AG04449 (cell line): ENCODE measurements at regions of chr10 and their contacts with region 1.

Region 1: DNA sequence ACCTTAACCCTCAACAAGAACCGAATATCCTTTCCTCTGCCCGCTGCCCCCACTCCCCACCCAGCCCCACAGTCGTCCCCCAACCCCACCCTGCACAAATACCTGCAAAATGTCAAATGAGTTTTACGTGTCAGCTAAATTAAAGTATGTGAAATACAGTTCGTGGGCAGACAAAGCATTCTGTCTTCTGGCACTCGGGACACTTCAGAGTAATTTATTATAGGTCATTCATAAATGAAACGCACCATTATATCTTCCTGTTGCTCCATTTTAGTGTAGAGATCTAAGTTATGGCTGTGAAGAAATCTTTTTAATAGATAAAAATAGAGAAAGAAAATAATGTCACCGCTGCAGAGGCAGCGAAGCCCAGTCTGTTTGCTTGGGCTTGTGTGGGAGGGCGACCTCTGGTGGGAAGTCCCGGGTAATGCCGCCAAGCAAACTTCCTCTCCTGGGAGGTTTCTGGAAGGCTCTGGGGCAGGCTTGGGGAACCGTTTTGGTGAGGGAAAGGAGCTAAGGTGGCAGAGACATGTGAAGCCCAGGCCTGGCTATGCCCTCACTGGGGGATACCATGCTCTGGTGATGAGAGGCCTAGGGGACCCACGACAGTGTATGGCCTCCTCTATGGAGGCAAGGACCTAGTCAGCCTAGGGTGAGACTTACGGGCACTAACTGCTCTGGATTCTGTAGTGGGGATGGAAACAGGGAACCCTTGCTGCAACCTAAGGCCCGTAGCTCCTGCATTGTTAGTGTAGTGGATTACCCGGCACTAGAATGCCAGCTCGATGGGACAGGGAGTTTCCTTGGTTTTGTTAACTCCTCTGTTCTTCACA is 604.9 kb downstream of the LRMDA start:
- DNase-seq: no peak
- H3K4me3 ChIP-seq: no peak overlapping the region
- CTCF ChIP-seq: peak; percentile 93

Region 2: DNA sequence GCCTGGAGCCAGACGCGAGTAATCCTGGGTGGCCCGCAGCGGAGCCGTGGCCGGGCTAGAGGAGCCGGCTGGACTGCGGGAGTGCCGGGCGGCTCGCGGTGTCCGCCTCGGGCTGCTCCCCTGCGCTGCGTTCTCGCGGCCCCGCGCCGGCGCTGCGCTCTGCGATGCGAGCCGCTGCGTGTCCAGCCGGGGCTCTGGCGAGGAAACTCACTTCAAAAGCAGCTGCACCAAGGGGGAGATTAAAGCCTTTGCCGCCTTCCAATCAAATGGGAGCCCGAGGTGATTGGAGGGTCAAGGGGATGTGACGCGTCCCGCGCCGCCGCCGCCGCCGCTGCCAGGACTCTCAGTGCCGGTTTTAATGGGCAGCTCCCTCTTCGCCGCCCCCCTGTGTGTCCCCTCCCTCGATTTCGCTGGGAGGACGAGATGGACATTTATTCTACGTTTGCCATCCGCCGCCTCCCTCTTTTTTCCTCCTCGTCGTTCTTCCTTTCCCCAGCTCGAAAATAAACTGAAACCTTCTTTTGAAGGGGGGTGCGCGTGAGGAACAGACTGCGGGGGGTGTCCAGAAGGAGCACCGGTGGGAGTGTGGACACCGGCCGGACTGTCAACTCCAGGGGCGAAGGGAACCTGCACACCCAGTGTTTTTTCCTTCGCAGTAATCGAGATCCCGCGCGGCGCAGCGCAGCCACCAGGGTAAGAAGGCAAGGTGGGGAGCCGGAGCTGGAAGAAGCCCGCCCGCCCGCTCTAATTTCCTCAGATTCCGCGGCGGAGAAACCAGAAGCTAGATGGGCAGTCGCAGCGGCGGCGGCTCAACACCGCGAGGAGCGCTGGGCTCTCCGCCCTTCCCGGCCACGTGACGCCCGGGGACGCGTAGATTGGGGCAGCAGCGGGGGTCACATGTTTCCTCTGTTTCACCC is 634.5 kb before region 1 on chr10 and contains the start of gene ZNF503:
- CTCF ChIA-PET with region 1: interaction called, 32 read pairs
- POLR2A ChIA-PET with region 1: interaction called, 4 read pairs
- DNase-seq: peak; percentile 76
- H3K4me3 ChIP-seq: peak within 1 kb of the TSS; percentile 96
- CTCF ChIP-seq: peak; percentile 18

Region 3: GRCh38 chr10:76021398-76021797 is 14.9 kb before region 1 on chr10:
- CTCF ChIA-PET with region 1: interaction called, 43 read pairs
- POLR2A ChIA-PET with region 1: no interaction called
- DNase-seq: no peak
- H3K4me3 ChIP-seq: no peak overlapping the region
- CTCF ChIP-seq: no peak

Region 4: DNA sequence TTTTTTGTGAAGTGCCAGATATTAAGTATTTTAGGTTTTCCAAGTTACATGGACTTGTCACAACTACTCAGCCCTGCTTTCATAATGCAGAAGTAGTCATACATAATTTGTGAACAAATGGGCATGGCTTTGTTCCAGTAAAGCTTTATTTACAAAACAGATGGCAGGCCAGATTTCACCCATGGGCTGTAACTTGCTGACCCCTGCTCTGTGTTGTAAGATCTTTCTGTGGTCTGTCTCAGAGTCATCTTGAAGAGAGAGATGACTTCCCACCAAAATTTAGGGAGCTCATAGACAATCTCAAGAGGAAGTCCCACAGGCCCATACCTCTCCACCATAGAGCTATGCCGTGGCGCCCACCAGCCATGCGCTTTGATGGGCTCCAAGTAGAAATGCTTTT is 11.2 kb after region 1 on chr10:
- CTCF ChIA-PET with region 1: interaction called, 26 read pairs
- POLR2A ChIA-PET with region 1: no interaction called
- DNase-seq: no peak
- H3K4me3 ChIP-seq: no peak overlapping the region
- CTCF ChIP-seq: no peak

Region 5: GRCh38 chr10:76052682-76053503 is 16.6 kb after region 1 on chr10:
- CTCF ChIA-PET with region 1: interaction called, 34 read pairs
- POLR2A ChIA-PET with region 1: no interaction called
- DNase-seq: no peak
- H3K4me3 ChIP-seq: no peak overlapping the region
- CTCF ChIP-seq: no peak